CD8-positive, alpha-beta T cell (primary cell): ENCODE measurements at regions of chr3 and their contacts with region 1.

Region 1: DNA sequence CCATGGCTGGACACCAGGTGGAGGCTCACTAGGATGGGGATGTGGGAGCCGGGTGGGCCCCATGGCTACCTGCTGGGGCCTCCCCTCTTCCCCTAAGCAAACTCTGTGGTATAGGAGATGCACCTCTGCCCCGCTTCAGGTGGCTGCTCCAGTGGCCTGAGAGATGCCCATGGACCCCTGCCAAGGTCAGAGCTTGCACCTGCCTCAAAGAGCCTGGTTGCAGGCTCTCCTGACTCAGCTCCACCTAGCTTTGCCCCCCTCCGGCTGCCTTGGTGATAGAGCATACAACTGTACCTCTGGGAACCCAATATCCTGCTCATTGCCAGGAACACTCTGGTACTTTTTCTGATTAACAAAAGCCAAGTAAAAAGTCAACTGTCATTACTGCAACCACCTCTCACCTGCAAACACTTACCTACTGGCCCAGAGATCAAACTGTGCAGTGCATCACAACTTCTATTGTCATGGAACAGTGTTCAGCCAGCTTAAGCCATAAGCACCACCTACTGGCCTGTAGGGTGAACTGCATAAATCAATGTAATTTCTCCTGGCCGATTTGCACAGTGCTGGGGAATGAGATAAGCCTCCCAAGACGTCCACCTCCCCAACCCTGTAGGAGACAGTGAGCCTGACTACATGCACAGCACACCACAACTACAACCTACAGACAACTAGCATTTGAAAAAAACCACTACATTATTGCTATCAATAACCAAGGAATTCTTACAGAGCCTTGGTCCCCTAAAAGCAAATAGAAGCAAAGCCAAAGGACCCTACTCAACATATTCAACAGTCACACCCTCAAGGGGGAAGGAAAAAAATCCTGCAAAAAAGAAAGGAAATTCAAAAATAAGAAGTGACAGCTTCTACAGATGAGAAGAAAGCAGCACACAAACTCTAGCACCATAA is 352.4 kb upstream of the ARHGEF26 start:
- DNase-seq: peak in 8 of 9 experiments; percentile 24 to 75 (median 46)
- ATAC-seq: peak; percentile 98
- H3K4me3 ChIP-seq: no peak overlapping the region
- H3K4me3 Mint-ChIP-seq: no peak overlapping the region
- H3K27ac ChIP-seq: no peak overlapping the region
- H3K27ac Mint-ChIP-seq: no peak overlapping the region
- H3K4me1 ChIP-seq: no peaks in the 10 kb centered on the region
- H3K4me1 Mint-ChIP-seq: no peaks in the 10 kb centered on the region
- H3K27me3 ChIP-seq: no peaks in the 10 kb centered on the region
- H3K27me3 Mint-ChIP-seq: peaks cover 16% of the 10 kb centered on the region
- CTCF ChIP-seq: peak; percentile 81

Region 2: DNA sequence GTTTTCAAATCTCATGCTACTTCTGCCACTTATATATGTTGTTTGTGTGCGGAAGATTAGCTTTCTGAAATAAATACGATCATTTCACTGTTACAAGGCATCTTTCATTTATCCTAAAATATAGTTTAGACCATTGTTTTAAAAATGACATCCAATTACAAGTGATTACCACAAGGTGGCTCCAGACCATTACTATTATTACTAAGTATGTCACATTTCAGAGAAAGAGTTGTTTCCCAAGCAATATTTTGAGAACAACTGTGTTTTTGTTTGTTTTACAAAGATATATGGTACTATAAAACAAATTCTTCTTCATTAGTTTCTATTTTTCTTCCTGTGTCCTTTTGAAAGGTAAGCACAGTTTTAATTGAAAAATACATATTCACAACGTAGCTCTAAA is 742.8 kb before region 1 on chr3:
- CTCF ChIA-PET with region 1: interaction called, 6 read pairs
- POLR2A ChIA-PET with region 1: no interaction called
- intact Hi-C with region 1: loop called (anchors 1 kb)
- DNase-seq: peak in 2 of 9 experiments; percentile 42 to 56
- ATAC-seq: no peak
- H3K4me3 ChIP-seq: no peak overlapping the region
- H3K4me3 Mint-ChIP-seq: no peak overlapping the region
- H3K27ac ChIP-seq: no peak overlapping the region
- H3K27ac Mint-ChIP-seq: no peak overlapping the region
- H3K4me1 ChIP-seq: no peaks in the 10 kb centered on the region
- H3K4me1 Mint-ChIP-seq: no peaks in the 10 kb centered on the region
- H3K27me3 ChIP-seq: no peaks in the 10 kb centered on the region
- H3K27me3 Mint-ChIP-seq: peaks cover 16% of the 10 kb centered on the region
- CTCF ChIP-seq: peak; percentile 79

Region 3: GRCh38 chr3:153166796-153167195 is 602.0 kb before region 1 on chr3:
- CTCF ChIA-PET with region 1: interaction called, 8 read pairs
- POLR2A ChIA-PET with region 1: no interaction called
- intact Hi-C with region 1: loop called (anchors 1 to 2 kb)
- DNase-seq: no peak
- ATAC-seq: no peak
- H3K4me3 ChIP-seq: peak overlapping the region in 1 of 2 experiments; percentile 75
- H3K4me3 Mint-ChIP-seq: peak overlapping the region; percentile 99
- H3K27ac ChIP-seq: peak overlapping the region in 1 of 2 experiments; percentile 65
- H3K27ac Mint-ChIP-seq: peak overlapping the region; percentile 87
- H3K4me1 ChIP-seq: peaks cover 39% of the 10 kb centered on the region
- H3K4me1 Mint-ChIP-seq: peaks cover 63% of the 10 kb centered on the region
- H3K27me3 ChIP-seq: no peaks in the 10 kb centered on the region
- H3K27me3 Mint-ChIP-seq: no peaks in the 10 kb centered on the region
- CTCF ChIP-seq: no peak

Region 4: GRCh38 chr3:153172796-153173757 is 595.7 kb before region 1 on chr3:
- CTCF ChIA-PET with region 1: interaction called, 7 read pairs
- POLR2A ChIA-PET with region 1: no interaction called
- intact Hi-C with region 1: loop called in 1 of 2 experiments (anchors 2 kb)
- DNase-seq: no peak
- ATAC-seq: no peak
- H3K4me3 ChIP-seq: no peak overlapping the region
- H3K4me3 Mint-ChIP-seq: no peak overlapping the region
- H3K27ac ChIP-seq: no peak overlapping the region
- H3K27ac Mint-ChIP-seq: peak overlapping the region; percentile 68
- H3K4me1 ChIP-seq: peaks cover 2% of the 10 kb centered on the region
- H3K4me1 Mint-ChIP-seq: peaks cover 31% of the 10 kb centered on the region
- H3K27me3 ChIP-seq: no peaks in the 10 kb centered on the region
- H3K27me3 Mint-ChIP-seq: no peaks in the 10 kb centered on the region
- CTCF ChIP-seq: no peak

Region 5: GRCh38 chr3:153260687-153261086 is 508.1 kb before region 1 on chr3:
- CTCF ChIA-PET with region 1: no interaction called
- POLR2A ChIA-PET with region 1: no interaction called
- intact Hi-C with region 1: no loop called
- DNase-seq: no peak
- ATAC-seq: no peak
- H3K4me3 ChIP-seq: no peak overlapping the region
- H3K4me3 Mint-ChIP-seq: no peak overlapping the region
- H3K27ac ChIP-seq: no peak overlapping the region
- H3K27ac Mint-ChIP-seq: no peak overlapping the region
- H3K4me1 ChIP-seq: no peaks in the 10 kb centered on the region
- H3K4me1 Mint-ChIP-seq: peaks cover 18% of the 10 kb centered on the region
- H3K27me3 ChIP-seq: no peaks in the 10 kb centered on the region
- H3K27me3 Mint-ChIP-seq: no peaks in the 10 kb centered on the region
- CTCF ChIP-seq: no peak

Region 6: DNA sequence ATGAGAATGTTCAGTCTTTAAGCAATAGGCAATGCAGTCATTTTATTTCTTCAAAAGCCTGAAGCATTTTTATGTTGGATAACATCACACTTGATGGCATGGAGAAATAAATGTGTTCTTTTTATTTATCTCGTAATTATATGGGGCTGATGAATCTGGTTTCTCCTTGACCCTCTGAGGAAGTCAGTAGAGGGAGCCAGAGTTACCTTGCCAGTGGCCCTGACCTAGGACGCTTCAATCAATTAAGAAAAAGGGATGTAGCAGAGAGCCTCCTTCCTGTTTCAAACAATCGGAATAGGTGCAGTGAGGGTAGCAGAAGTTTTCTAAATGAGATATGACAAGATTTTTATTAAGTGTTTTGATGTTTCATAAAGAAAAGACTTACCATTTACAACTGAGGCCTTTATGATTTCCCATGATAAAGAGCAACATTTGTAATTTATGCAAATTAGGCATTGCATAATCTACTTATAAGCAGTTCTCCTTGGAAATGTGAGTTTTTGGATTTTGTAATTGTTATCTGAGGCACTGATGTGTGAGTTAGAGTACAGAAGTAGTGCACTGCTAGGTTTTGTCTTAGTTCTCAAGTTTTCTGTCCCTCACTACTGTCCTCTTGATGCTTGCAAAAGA is 477.6 kb before region 1 on chr3:
- CTCF ChIA-PET with region 1: interaction called, 28 read pairs
- POLR2A ChIA-PET with region 1: no interaction called
- intact Hi-C with region 1: loop called (anchors 1 to 5 kb)
- DNase-seq: peak in 2 of 9 experiments; percentile 44 to 57
- ATAC-seq: no peak
- H3K4me3 ChIP-seq: no peak overlapping the region
- H3K4me3 Mint-ChIP-seq: no peak overlapping the region
- H3K27ac ChIP-seq: no peak overlapping the region
- H3K27ac Mint-ChIP-seq: no peak overlapping the region
- H3K4me1 ChIP-seq: peaks cover 11% of the 10 kb centered on the region
- H3K4me1 Mint-ChIP-seq: peaks cover 38% of the 10 kb centered on the region
- H3K27me3 ChIP-seq: no peaks in the 10 kb centered on the region
- H3K27me3 Mint-ChIP-seq: no peaks in the 10 kb centered on the region
- CTCF ChIP-seq: no peak

Region 7: GRCh38 chr3:153443961-153444360 is 324.9 kb before region 1 on chr3:
- CTCF ChIA-PET with region 1: interaction called, 5 read pairs
- POLR2A ChIA-PET with region 1: no interaction called
- intact Hi-C with region 1: loop called in 1 of 2 experiments (anchors 2 kb)
- DNase-seq: peak in 2 of 9 experiments; percentile 9 to 17
- ATAC-seq: no peak
- H3K4me3 ChIP-seq: no peak overlapping the region
- H3K4me3 Mint-ChIP-seq: no peak overlapping the region
- H3K27ac ChIP-seq: no peak overlapping the region
- H3K27ac Mint-ChIP-seq: no peak overlapping the region
- H3K4me1 ChIP-seq: no peaks in the 10 kb centered on the region
- H3K4me1 Mint-ChIP-seq: peaks cover 10% of the 10 kb centered on the region
- H3K27me3 ChIP-seq: no peaks in the 10 kb centered on the region
- H3K27me3 Mint-ChIP-seq: no peaks in the 10 kb centered on the region
- CTCF ChIP-seq: no peak

Region 8: DNA sequence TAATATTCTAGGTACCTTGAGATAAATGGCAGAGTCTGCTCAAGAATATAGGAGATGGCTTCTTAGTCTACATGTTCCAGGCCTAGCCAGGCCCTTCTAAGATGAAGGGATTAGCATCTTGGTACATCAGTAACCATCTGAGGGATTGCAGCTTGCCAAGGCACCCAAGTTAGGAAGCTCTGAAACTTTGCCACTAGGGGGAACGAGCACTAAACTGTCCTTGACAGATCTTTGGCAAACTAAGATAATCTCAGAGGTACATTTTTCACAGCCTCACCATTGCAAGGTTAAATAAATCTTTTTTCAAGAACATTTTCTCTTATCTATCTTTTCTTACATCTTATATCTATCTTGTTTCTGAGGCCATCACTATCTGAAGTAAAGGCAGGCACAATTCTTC is 255.6 kb before region 1 on chr3:
- CTCF ChIA-PET with region 1: interaction called, 14 read pairs
- POLR2A ChIA-PET with region 1: no interaction called
- intact Hi-C with region 1: no loop called
- DNase-seq: peak in 2 of 9 experiments; percentile 26 to 32
- ATAC-seq: no peak
- H3K4me3 ChIP-seq: no peak overlapping the region
- H3K4me3 Mint-ChIP-seq: no peak overlapping the region
- H3K27ac ChIP-seq: no peak overlapping the region
- H3K27ac Mint-ChIP-seq: no peak overlapping the region
- H3K4me1 ChIP-seq: no peaks in the 10 kb centered on the region
- H3K4me1 Mint-ChIP-seq: peaks cover 2% of the 10 kb centered on the region
- H3K27me3 ChIP-seq: no peaks in the 10 kb centered on the region
- H3K27me3 Mint-ChIP-seq: no peaks in the 10 kb centered on the region
- CTCF ChIP-seq: peak; percentile 16